ENCODE measurements at regions of chr5 and their contacts with region 1.

Region 1: DNA sequence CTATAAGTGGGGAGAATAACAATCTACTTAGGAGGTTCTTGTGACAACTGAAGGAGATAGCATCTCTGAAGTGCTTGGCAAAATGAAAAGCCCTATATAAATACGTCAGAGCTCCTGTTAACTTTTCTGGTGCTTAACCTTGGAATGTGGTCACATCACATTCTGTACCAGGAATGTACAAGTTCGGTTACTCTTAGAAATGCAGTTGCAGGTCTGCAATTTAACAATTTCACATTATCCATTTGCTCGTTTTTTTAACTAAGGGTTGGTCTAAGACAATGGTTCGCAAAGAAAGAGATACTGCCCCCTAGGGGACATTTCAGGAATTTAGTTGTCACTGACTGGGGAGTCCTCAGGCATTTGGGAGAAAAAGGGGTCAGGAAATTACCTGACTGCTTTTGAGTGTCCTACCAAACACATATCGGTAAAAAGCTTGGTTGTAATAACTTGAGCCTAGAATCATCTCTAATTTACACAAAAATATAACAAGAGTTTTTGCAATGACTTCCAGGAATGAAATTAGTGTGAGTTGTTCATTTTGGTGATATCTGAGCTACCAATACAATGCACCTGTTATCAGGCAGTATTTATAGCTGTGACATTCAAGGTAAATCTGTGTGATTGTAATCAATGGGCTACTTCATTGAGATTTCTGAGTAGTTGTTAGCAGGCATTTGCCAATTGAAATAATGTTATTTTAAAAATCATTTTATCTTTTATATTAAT is 5.4 kb upstream of the HBEGF start:
- DNase-seq: peak; percentile 70 to 81 (median 77)
- H3K4me3 ChIP-seq: no peak overlapping the region
- H3K4me3 Mint-ChIP-seq: peak overlapping the region in 3 of 8 donors; percentile 25 to 53 (median 49)
- H3K27ac ChIP-seq: no peak overlapping the region
- H3K27ac Mint-ChIP-seq: peak overlapping the region in 2 of 7 donors; percentile 19 to 61
- H3K4me1 ChIP-seq: peaks cover 11% of the 10 kb centered on the region
- H3K4me1 Mint-ChIP-seq: peaks cover 8 to 16% (median 11%) of the 10 kb centered on the region in 4 donors
- H3K27me3 ChIP-seq: no peaks in the 10 kb centered on the region
- H3K27me3 Mint-ChIP-seq: peaks cover 1 to 5% of the 10 kb centered on the region in 2 donors

Region 2: GRCh38 chr5:140235791-140236551 is 115.8 kb before region 1 on chr5:
- CTCF ChIA-PET with region 1: interaction called, 518 read pairs
- POLR2A ChIA-PET with region 1: interaction called, 4 read pairs
- intact Hi-C with region 1: loop called (anchors 1 kb)
- DNase-seq: no peak
- H3K4me3 ChIP-seq: no peak overlapping the region
- H3K4me3 Mint-ChIP-seq: no peak overlapping the region
- H3K27ac ChIP-seq: no peak overlapping the region
- H3K27ac Mint-ChIP-seq: no peak overlapping the region
- H3K4me1 ChIP-seq: no peaks in the 10 kb centered on the region
- H3K4me1 Mint-ChIP-seq: peaks cover 0 to 1% (median 0%) of the 10 kb centered on the region in 4 donors
- H3K27me3 ChIP-seq: no peaks in the 10 kb centered on the region
- H3K27me3 Mint-ChIP-seq: no peaks in the 10 kb centered on the region

Region 3: GRCh38 chr5:140253947-140254346 is 97.8 kb before region 1 on chr5:
- CTCF ChIA-PET with region 1: interaction called, 518 read pairs
- POLR2A ChIA-PET with region 1: no interaction called
- intact Hi-C with region 1: no loop called
- DNase-seq: no peak
- H3K4me3 ChIP-seq: no peak overlapping the region
- H3K4me3 Mint-ChIP-seq: no peak overlapping the region
- H3K27ac ChIP-seq: no peak overlapping the region
- H3K27ac Mint-ChIP-seq: peak overlapping the region in 2 of 7 donors; percentile 11 to 50
- H3K4me1 ChIP-seq: peaks cover 75% of the 10 kb centered on the region
- H3K4me1 Mint-ChIP-seq: peaks cover 30 to 54% (median 45%) of the 10 kb centered on the region in 4 donors
- H3K27me3 ChIP-seq: no peaks in the 10 kb centered on the region
- H3K27me3 Mint-ChIP-seq: no peaks in the 10 kb centered on the region

Region 4: GRCh38 chr5:140302786-140303639 is 48.8 kb before region 1 on chr5 and contains the start of gene PFDN1:
- CTCF ChIA-PET with region 1: interaction called, 13 read pairs
- POLR2A ChIA-PET with region 1: interaction called, 11 read pairs
- intact Hi-C with region 1: loop called (anchors 5 kb)
- DNase-seq: peak; percentile 89 to 94 (median 92)
- H3K4me3 ChIP-seq: peak within 1 kb of the TSS; percentile 87 to 92
- H3K4me3 Mint-ChIP-seq: peak within 1 kb of the TSS; percentile 96 to 100 (median 100)
- H3K27ac ChIP-seq: peak within 1 kb of the TSS; percentile 81
- H3K27ac Mint-ChIP-seq: peak within 1 kb of the TSS; percentile 85 to 99 (median 99)
- H3K4me1 ChIP-seq: peaks cover 16% of the 10 kb centered on the region
- H3K4me1 Mint-ChIP-seq: peaks cover 15 to 26% (median 23%) of the 10 kb centered on the region in 4 donors
- H3K27me3 ChIP-seq: no peaks in the 10 kb centered on the region
- H3K27me3 Mint-ChIP-seq: peaks cover 0 to 3% of the 10 kb centered on the region in 2 donors
- total RNA-seq, gene PFDN1: 24.8 to 26.2 TPM

Region 5: GRCh38 chr5:140336388-140336787 is 15.4 kb before region 1 on chr5:
- CTCF ChIA-PET with region 1: interaction called, 20 read pairs
- POLR2A ChIA-PET with region 1: no interaction called
- intact Hi-C with region 1: no loop called
- DNase-seq: no peak
- H3K4me3 ChIP-seq: no peak overlapping the region
- H3K4me3 Mint-ChIP-seq: no peak overlapping the region
- H3K27ac ChIP-seq: no peak overlapping the region
- H3K27ac Mint-ChIP-seq: peak overlapping the region in 1 of 7 donors; percentile 87
- H3K4me1 ChIP-seq: peaks cover 2% of the 10 kb centered on the region
- H3K4me1 Mint-ChIP-seq: peaks cover 0 to 10% (median 5%) of the 10 kb centered on the region in 4 donors
- H3K27me3 ChIP-seq: no peaks in the 10 kb centered on the region
- H3K27me3 Mint-ChIP-seq: no peaks in the 10 kb centered on the region

Region 6: DNA sequence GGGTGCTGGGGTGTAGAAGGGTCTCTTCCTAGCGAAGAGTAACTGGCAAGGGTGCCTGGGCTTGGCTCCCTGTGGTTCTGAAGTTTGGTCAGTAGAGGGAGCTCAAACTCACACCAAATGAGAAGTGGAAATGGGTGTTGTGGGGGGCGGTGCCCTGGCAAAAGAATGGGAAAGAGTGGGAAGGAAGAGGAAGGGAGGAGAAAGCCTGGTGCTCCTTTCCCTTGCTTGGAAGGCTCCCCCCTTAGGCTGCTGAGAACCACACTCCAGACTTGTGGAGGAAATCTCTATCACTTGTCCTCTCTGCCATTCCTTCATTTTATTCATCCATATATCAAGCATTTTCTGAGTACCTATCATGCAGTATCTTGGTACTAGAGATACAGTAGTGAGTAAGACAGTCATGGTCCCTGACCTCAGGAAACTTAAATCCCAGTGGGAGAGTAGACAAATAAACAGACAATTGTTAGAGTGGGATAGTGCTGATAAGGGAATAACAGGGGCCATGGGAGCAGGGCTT is 21.3 kb after region 1 on chr5:
- CTCF ChIA-PET with region 1: interaction called, 14 read pairs
- POLR2A ChIA-PET with region 1: no interaction called
- intact Hi-C with region 1: no loop called
- DNase-seq: peak in 4 of 5 donors; percentile 22 to 38 (median 31)
- H3K4me3 ChIP-seq: no peak overlapping the region
- H3K4me3 Mint-ChIP-seq: no peak overlapping the region
- H3K27ac ChIP-seq: no peak overlapping the region
- H3K27ac Mint-ChIP-seq: peak overlapping the region in 1 of 7 donors; percentile 27
- H3K4me1 ChIP-seq: no peaks in the 10 kb centered on the region
- H3K4me1 Mint-ChIP-seq: peaks cover 0 to 7% (median 3%) of the 10 kb centered on the region in 4 donors
- H3K27me3 ChIP-seq: no peaks in the 10 kb centered on the region
- H3K27me3 Mint-ChIP-seq: no peaks in the 10 kb centered on the region

Measured in CD4-positive, alpha-beta memory T cell (primary cell).